ENCODE measurements at regions of chr16 and their contacts with region 1.

Region 1: GRCh38 chr16:87383629-87384161 is at the start of gene FBXO31:
- DNase-seq: peak; percentile 92
- ATAC-seq: peak; percentile 89
- total RNA-seq, gene FBXO31: 78.9 TPM

Region 2: GRCh38 chr16:87150681-87151280 is 232.9 kb before region 1 on chr16:
- intact Hi-C with region 1: no loop called
- DNase-seq: no peak
- ATAC-seq: no peak

Region 3: GRCh38 chr16:87169509-87169995 is 214.1 kb before region 1 on chr16:
- intact Hi-C with region 1: no loop called
- DNase-seq: no peak
- ATAC-seq: no peak

Region 4: DNA sequence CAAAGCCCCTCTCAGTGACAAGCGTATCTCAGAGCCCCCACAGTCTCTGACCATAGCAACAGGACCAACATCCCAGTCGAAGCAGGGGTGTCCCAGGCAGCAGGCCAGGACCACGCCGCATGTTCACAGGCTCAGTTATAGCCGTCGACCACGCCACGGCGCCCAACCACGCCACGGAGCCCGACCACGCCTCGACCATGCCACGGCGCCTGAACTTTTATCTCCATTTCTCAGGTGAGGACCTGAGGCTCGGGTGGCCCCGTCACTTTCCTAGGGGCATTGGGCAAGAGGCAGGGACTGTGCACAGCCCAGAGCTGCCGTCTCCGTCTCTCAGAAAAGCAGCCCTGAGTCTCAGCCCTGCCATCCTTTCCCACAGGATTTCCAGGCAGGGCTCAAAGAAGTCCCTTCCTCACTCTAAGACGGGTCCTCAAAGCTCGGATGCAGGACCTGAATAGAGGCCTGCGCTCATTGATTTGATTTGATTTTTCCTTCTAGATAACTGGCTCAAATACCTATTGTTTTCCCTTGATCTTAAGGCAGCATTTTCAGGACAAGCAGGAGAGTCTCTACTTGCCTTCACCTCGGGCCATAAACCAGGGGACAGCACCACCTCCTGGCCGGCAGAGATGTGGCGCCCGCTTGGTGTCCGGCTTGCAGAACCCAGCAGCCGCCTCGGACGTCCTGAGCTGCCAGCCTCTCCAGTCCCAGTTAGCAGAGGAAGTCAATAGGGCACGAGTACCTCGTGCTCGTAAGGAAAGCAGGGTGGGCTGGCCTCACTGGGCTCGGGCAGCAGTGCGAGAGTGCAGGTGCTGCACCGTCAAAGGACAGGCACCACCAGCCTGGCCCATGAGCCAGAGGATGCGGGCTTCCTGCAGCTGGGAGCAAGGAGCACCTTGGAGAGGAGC is 105.3 kb before region 1 on chr16:
- intact Hi-C with region 1: no loop called
- DNase-seq: peak; percentile 82
- ATAC-seq: peak; percentile 97

Region 5: DNA sequence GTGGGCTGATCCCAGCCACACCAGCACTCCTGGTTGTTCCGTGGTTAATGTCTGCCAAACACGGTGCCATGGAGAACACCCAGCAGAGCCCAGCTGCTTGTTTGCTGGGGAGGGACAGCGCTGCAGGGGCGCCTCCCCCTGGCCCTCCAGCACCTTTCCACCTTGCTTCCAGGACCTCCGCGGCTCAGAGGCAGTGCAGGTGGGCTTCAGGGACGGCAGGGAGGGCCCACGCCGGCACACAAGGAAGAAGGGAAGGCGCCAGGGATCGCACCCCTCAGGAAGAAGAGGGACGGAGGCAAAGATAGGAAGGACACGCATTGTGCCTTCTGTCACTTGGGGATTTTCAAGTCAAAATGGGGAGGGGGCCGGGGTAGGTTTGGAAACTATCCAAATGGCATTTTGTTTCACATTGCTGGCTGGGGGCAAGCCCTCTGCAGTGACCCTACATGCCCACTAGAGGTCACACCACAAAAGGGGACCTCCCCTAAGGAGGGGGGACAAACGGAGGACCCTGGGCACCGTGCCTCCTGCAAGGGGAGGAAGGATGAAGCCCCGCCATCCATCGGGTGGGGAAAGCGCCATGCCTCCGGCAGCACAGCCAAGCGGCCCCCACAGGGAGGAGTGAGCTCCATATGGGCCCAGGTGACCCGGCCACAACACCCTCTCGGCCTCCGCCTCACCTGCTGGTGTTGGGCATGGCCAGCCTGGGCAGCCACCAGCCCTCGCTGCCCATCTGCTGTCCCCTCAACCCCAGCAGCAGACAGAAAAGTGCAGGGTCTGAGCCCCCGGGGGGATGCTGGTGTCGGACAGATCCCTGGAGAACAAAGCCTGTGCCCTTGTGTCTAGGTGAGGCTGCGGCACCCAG is 59.1 kb before region 1 on chr16:
- intact Hi-C with region 1: loop called (anchors 5 kb)
- DNase-seq: peak; percentile 55
- ATAC-seq: peak; percentile 68

Region 6: GRCh38 chr16:88993166-88993761 is 1609.6 kb after region 1 on chr16:
- intact Hi-C with region 1: no loop called
- DNase-seq: no peak
- ATAC-seq: peak; percentile 25

Measured in Right ventricle myocardium superior (tissue), 1 donor.